ENCODE measurements at regions of chr1 and their contacts with region 1.

Region 1: DNA sequence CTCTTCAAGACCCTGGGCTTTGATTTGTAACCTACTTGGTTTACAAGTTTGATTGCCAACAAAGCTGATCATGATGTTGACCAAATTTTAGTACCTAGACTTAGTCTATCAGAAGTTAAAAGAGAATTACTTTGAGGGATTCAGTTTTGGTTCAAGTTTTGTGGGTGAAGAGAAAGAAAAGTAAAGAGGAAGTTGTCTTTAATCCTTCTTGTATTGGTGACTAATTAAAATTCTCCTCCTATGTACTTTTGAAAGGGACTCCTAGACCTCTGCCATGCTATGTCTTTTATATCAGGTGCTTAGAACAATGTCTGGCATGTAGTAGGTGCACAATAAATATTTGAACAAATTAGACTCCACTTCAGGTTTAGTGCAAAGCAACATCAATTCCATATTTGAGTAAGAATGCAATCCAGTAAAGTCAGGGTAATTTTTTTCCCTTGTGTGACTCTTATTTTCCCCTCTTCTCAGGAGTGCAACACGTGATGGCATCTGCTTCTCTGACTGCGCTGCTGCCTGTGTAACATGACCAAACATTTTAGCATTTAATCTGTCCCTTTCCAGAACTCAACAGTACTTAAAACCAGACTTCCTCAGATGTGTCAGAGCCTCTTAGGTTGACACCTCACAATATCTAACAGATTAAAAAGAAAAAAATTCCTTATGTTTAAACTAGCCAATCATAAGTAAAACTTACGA is 41.1 kb upstream of the KCNQ4 start:
- DNase-seq: peak; percentile 53
- H3K4me3 Mint-ChIP-seq: no peak overlapping the region
- H3K27ac Mint-ChIP-seq: peak overlapping the region; percentile 73
- H3K4me1 Mint-ChIP-seq: peaks cover 55% of the 10 kb centered on the region
- H3K27me3 Mint-ChIP-seq: no peaks in the 10 kb centered on the region

Region 2: GRCh38 chr1:40625066-40625465 is 117.4 kb before region 1 on chr1:
- CTCF ChIA-PET with region 1: no interaction called
- POLR2A ChIA-PET with region 1: no interaction called
- intact Hi-C with region 1: loop called (anchors 5 kb)
- DNase-seq: peak; percentile 45
- H3K4me3 Mint-ChIP-seq: no peak overlapping the region
- H3K27ac Mint-ChIP-seq: no peak overlapping the region
- H3K4me1 Mint-ChIP-seq: peaks cover 18% of the 10 kb centered on the region
- H3K27me3 Mint-ChIP-seq: no peaks in the 10 kb centered on the region

Region 3: GRCh38 chr1:40676501-40676900 is 66.0 kb before region 1 on chr1:
- CTCF ChIA-PET with region 1: no interaction called
- POLR2A ChIA-PET with region 1: no interaction called
- intact Hi-C with region 1: no loop called
- DNase-seq: no peak
- H3K4me3 Mint-ChIP-seq: no peak overlapping the region
- H3K27ac Mint-ChIP-seq: no peak overlapping the region
- H3K4me1 Mint-ChIP-seq: no peaks in the 10 kb centered on the region
- H3K27me3 Mint-ChIP-seq: peaks cover 2% of the 10 kb centered on the region

Region 4: DNA sequence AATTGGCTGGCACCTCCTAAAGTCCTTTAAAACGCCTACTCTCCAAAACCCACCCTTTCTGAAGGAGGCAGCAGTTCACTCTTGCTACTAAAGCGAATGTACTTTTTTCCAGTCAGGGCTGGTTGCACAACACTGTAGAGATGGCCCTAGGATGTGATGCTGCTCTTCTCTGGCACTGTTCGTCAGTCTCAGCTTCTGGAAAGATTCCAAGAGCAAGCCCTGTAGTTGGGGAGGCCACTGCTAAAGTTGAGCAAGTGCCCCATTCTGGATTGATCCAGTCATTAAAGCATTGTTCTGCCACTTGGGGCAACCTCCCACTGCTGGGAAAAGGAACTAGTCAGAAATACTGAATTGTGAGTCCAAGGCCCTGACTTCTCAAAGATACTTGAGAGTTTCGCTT is 12.6 kb after region 1 on chr1:
- CTCF ChIA-PET with region 1: no interaction called
- POLR2A ChIA-PET with region 1: interaction called, 3 read pairs
- intact Hi-C with region 1: loop called (anchors 1 kb)
- DNase-seq: no peak
- H3K4me3 Mint-ChIP-seq: no peak overlapping the region
- H3K27ac Mint-ChIP-seq: no peak overlapping the region
- H3K4me1 Mint-ChIP-seq: peaks cover 25% of the 10 kb centered on the region
- H3K27me3 Mint-ChIP-seq: no peaks in the 10 kb centered on the region

Region 5: DNA sequence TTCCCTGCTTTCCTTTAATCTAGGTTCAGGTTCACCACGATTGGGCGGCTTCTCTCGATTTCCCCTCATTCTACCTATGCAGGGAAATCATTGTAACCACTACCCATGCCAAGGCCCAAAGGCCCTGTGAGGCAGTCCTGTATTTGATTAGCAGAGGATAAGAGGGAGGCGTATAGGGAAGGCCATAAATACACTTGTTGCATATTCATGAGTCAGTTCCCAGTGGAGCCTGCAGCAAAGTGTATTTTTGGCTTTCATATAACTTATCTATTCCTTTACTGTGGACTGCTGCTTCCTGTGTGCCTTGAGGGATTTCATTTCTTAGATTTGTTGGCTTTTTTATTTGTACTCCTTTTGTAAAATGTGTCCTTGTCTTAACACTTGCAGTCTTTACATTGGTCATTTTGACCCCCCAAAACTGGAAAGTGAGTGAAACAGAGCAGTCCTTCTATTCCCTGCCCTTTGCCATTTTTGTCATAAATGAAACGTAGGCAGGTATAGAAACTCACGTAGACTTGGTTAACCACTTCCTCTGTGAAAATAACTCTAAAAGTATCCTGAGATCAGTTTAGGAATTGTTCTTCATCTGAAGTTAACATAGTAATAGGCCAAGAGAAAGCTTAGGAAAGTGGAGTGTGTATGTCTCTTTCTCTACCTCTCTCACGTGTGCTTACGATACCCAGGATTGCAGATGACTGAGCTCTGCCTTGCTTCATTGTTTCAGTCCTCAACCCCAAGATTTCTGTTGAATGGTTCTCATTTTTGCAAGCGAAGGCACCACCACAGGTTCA is 21.4 kb after region 1 on chr1:
- CTCF ChIA-PET with region 1: no interaction called
- POLR2A ChIA-PET with region 1: no interaction called
- intact Hi-C with region 1: loop called (anchors 1 kb)
- DNase-seq: peak; percentile 18
- H3K4me3 Mint-ChIP-seq: no peak overlapping the region
- H3K27ac Mint-ChIP-seq: peak overlapping the region; percentile 78
- H3K4me1 Mint-ChIP-seq: peaks cover 32% of the 10 kb centered on the region
- H3K27me3 Mint-ChIP-seq: no peaks in the 10 kb centered on the region